ENCODE measurements at regions of chr20 and their contacts with region 1.

Region 1: GRCh38 chr20:31551581-31552081 is 37.4 kb downstream of the HM13 start:
- DNase-seq: no peak
- H3K4me3 ChIP-seq: no peak overlapping the region
- CTCF ChIP-seq: no peak
- POLR2A ChIP-seq: no peak

Region 2: DNA sequence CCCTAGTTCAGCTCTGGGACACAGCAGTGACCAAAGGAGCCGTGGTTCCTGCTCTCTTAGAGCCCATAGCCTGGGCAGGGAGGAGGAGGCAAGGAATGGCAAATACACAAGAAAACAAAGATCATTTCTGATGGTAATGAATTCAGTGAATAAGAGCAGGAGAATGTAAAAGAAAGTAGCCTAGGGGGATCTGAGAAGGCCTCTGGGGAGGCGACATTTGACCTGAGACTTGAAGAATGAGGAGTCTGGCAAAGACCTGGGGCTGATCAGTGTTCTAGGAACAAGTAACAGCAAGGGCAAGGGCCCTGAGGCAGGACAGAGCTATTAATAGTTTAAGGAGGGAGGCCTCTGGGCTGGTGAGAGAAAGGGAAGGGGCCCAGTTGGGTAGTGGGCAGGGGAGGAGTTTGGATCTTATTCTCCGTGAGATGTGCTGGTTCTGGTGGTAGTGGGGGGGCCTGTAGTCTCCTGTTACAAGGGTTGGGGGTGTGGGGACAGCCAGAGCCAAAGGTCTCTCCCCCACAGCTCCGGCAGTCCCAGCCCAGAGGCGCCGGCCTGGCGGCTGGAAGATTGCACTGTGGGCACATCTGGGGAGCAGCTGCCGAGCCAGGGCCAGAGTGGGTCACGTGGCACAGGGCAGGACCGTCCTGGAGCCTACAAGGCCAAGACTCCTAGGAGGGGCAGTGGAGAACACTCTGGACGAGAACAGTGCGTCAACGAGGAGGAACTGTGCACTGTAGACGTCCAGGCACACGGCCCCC is 44.2 kb after region 1 on chr20:
- intact Hi-C with region 1: no loop called
- DNase-seq: peak; percentile 88 to 97
- H3K4me3 ChIP-seq: no peak overlapping the region
- CTCF ChIP-seq: no peak
- POLR2A ChIP-seq: no peak

Region 3: DNA sequence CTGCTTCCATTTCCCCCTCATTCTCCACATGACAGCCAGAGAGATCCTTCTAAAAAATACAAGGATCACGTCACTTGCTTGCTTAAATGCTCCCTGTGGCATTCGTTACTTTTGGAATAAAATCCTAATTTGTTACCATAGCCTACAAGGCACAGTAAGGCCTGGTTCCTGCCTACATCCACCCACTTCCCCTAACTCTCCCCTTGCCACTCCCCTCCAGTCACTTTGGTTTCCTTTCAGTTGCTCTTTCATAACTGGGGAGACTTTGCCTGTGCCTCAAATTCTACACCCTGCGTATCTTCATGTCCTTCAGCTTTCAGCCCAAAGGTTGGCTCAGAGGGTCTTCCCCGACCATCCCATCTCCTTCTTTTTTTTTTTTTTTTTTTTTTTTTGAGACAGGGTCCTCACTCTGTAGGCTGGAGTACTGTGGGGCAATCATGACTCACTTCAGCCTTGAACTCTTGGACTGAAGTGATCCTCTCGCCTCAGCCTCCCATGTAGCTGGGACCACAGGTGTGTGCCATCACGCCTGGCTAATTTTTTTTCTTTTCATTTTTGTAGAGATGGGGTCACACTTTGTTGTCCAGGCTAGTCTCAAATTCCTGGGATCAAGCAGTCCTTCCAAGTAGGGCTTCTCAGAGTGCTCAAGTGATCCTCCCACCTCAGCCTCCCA is 65.9 kb after region 1 on chr20:
- intact Hi-C with region 1: loop called (anchors 5 kb)
- DNase-seq: no peak
- H3K4me3 ChIP-seq: no peak overlapping the region
- CTCF ChIP-seq: no peak
- POLR2A ChIP-seq: no peak

Region 4: DNA sequence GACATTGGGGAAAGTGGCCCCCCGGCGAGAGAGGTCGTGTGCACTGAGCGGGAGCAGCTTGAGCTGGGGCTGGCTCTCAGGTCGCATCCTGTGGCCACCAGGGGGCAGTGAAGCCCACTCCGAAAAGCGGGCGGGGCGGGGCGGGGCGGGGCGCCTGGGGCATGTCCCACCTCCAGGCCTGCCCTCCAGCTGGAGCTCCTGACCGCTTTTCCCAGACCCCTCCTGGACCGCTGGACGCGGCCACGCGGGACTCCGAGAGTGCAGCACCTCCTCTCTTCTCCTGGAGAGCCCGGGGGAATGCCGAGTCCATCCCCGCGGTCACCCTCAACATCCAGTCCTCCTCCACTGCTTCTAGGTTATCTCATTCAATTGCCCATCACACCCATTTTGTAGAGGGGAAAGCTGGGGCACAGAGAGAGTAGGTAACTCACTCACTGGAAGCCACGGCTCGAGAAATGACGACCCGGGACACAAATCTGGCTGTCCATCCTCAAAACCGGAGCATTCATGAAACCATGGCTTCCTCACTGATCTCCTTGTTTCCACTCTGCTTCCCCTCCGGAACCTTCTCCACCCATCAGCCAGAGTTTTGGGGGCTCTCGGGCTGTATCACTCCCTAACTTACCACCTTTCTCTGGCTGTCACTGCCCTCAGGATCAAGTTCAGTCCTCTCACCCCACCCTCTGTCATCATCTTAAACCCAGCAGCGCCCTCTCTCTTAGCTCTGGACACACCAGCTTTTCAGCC is 110.2 kb after region 1 on chr20:
- intact Hi-C with region 1: no loop called
- DNase-seq: peak; percentile 67 to 96
- H3K4me3 ChIP-seq: no peak overlapping the region
- CTCF ChIP-seq: no peak
- POLR2A ChIP-seq: no peak

Region 5: DNA sequence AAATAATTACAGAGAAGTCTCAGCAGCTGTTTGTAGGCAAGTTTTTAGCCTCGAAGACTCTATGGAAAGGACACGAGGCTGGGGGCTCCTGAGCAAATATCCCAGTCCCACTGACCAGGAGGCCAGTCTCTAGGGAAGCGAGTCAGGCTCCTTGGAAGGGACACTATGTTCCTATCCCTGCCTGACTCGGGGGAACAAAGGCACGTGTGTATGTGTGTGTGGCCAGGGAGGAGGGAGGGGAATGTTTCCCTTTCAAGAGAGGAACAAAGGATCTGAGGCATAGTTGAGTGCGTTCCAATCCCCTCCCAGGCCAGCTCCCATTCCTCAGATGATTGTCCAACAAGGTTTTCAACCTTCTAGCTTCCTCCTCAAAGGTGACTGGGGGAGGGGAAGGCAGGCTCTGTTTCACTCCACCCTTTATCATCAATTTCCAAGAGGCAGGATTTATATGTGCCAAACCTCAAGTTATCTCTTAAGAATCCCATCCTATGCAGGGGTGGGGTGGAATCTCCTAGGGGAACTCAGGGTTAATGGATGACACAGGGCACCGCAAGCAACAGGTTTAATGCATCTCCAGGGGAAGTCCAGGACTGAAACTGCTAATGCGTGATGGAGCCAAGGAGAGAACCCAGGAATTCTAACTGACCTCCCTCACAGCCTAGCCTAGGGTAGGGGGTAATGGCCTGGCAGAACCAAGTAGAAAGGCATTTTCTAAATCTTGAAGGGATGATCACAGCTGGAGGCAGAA is 161.1 kb after region 1 on chr20:
- intact Hi-C with region 1: no loop called
- DNase-seq: peak; percentile 95 to 97
- H3K4me3 ChIP-seq: no peak overlapping the region
- CTCF ChIP-seq: no peak
- POLR2A ChIP-seq: no peak

Measured in lower leg skin (tissue), 4 donors.